PC-3 (cell line): ENCODE measurements at regions of chr9 and their contacts with region 1.

Region 1: GRCh38 chr9:37953775-37954437 is 50.0 kb upstream of the SLC25A51 start:
- DNase-seq: peak; percentile 96
- ATAC-seq: peak; percentile 82
- H3K4me3 ChIP-seq: no peak overlapping the region
- H3K27ac ChIP-seq: peak overlapping the region; percentile 100
- H3K4me1 ChIP-seq: peaks cover 41% of the 10 kb centered on the region
- H3K27me3 ChIP-seq: no peaks in the 10 kb centered on the region
- CTCF ChIP-seq: no peak

Region 2: GRCh38 chr9:38068866-38069629 is 115.1 kb after region 1 on chr9 and contains the start of gene SHB:
- CTCF ChIA-PET with region 1: interaction called, 8 read pairs
- POLR2A ChIA-PET with region 1: no interaction called
- intact Hi-C with region 1: loop called (anchors 5 kb)
- DNase-seq: peak; percentile 59
- ATAC-seq: peak; percentile 41
- H3K4me3 ChIP-seq: peak within 1 kb of the TSS; percentile 95
- H3K27ac ChIP-seq: peak within 1 kb of the TSS; percentile 77
- H3K4me1 ChIP-seq: peaks cover 34% of the 10 kb centered on the region
- H3K27me3 ChIP-seq: no peaks in the 10 kb centered on the region
- CTCF ChIP-seq: 0 out of 2 replicates have a peak, but pooled peaks have one; percentile 17
- total RNA-seq, gene SHB: 56.4 and 77.1 TPM in 2 replicates

Region 3: GRCh38 chr9:38641985-38642864 is 688.3 kb after region 1 on chr9:
- CTCF ChIA-PET with region 1: no interaction called
- POLR2A ChIA-PET with region 1: no interaction called
- intact Hi-C with region 1: no loop called
- DNase-seq: peak; percentile 69
- ATAC-seq: peak; percentile 78
- H3K4me3 ChIP-seq: no peak overlapping the region
- H3K27ac ChIP-seq: no peak overlapping the region
- H3K4me1 ChIP-seq: peaks cover 30% of the 10 kb centered on the region
- H3K27me3 ChIP-seq: no peaks in the 10 kb centered on the region
- CTCF ChIP-seq: peak; percentile 59